Activated CD8-positive, alpha-beta T cell treated with anti-CD3 and anti-CD28 coated beads, Interleukin-2, amount 10 ng/mL, durations not matched to agents 7 days and 5 days (primary cell): ENCODE measurements at regions of chr13 and their contacts with region 1.

Region 1: DNA sequence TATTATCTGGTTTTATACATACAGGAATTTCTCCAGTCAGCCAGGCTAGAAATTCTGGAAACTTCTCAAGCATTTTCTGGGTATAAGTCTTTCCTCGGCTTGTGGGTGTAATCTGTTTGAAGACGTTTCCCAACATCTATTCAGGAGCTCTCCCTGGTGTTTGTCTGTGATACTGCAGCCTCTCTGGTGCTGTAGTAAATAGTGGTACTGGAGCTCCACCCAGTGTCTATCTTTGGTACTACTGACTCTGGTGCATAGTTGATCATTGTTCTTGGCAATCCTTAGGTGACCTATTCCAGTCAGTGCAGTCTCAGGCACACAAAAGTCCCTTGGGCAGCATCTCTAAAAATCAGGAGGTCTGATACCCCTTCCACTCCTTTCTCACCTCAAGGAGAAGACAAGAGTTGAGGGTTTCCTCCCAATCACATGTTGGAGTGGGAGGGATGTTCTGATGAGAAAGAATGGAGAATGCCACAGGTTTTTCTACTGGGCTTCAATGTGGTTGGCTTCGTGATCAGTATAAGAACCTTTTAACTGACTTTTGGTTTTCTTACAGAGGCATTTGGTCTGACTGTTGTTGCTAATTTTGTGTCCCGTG is 115.5 kb downstream of the CYSLTR2 start:
- DNase-seq: peak; percentile 93
- ATAC-seq: peak; percentile 96
- H3K4me3 Mint-ChIP-seq: no peak overlapping the region
- H3K27ac Mint-ChIP-seq: no peak overlapping the region
- H3K4me1 Mint-ChIP-seq: peaks cover 21% of the 10 kb centered on the region
- H3K27me3 Mint-ChIP-seq: peaks cover 16% of the 10 kb centered on the region

Region 2: GRCh38 chr13:48334534-48335127 is 434.6 kb before region 1 on chr13:
- CTCF ChIA-PET with region 1: interaction called, 28 read pairs
- POLR2A ChIA-PET with region 1: no interaction called
- DNase-seq: no peak
- ATAC-seq: peak; percentile 71
- H3K4me3 Mint-ChIP-seq: no peak overlapping the region
- H3K27ac Mint-ChIP-seq: no peak overlapping the region
- H3K4me1 Mint-ChIP-seq: peaks cover 25% of the 10 kb centered on the region
- H3K27me3 Mint-ChIP-seq: no peaks in the 10 kb centered on the region

Region 3: GRCh38 chr13:48595431-48596429 is 173.5 kb before region 1 on chr13:
- CTCF ChIA-PET with region 1: interaction called, 100 read pairs
- POLR2A ChIA-PET with region 1: no interaction called
- DNase-seq: peak; percentile 75
- ATAC-seq: peak; percentile 96
- H3K4me3 Mint-ChIP-seq: no peak overlapping the region
- H3K27ac Mint-ChIP-seq: no peak overlapping the region
- H3K4me1 Mint-ChIP-seq: no peaks in the 10 kb centered on the region
- H3K27me3 Mint-ChIP-seq: peaks cover 6% of the 10 kb centered on the region

Region 4: GRCh38 chr13:48731957-48732569 is 37.1 kb before region 1 on chr13:
- CTCF ChIA-PET with region 1: interaction called, 17 read pairs
- POLR2A ChIA-PET with region 1: no interaction called
- DNase-seq: peak; percentile 70
- ATAC-seq: peak; percentile 93
- H3K4me3 Mint-ChIP-seq: peak overlapping the region; percentile 40
- H3K27ac Mint-ChIP-seq: no peak overlapping the region
- H3K4me1 Mint-ChIP-seq: peaks cover 14% of the 10 kb centered on the region
- H3K27me3 Mint-ChIP-seq: peaks cover 5% of the 10 kb centered on the region

Region 5: DNA sequence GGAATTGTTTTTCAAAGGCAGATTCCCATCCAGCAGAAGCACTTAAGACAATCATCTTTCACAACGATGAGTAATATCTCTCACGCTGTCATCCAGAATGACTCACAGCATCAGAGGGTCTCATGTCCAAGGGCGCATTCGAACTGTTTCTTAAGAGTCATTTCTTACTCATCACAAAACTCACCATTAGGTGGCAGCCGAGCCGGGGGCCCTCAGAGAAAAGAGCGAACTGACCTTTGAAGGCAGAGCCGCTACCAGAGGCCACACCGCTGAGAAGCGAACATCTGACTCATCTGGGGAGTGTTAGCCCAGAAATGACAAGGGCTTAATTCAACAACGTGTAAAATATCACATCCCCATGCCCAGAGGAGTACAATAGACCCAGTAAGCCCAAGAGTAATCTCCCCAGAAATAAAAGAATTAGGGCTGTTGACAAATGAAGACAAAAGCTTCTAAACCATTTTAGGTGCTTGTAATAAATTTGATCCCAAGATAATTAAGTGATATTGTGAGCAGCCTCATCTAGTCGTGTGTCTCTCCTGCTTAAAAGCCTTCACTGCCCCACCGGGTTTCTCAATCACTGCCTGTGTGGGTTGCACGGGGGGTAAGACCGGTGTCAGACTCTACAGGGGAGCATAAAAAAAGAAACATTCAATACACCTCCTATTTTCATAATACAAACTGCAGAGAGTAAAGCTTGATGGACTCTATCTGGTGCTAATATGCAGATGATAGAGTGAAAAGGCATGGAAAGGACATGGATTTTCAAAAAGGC is 19.3 kb before region 1 on chr13:
- CTCF ChIA-PET with region 1: interaction called, 13 read pairs
- POLR2A ChIA-PET with region 1: no interaction called
- DNase-seq: peak; percentile 58
- ATAC-seq: peak; percentile 70
- H3K4me3 Mint-ChIP-seq: no peak overlapping the region
- H3K27ac Mint-ChIP-seq: no peak overlapping the region
- H3K4me1 Mint-ChIP-seq: peaks cover 7% of the 10 kb centered on the region
- H3K27me3 Mint-ChIP-seq: no peaks in the 10 kb centered on the region